ENCODE measurements at regions of chrX and their contacts with region 1.

Region 1: GRCh38 chrX:74015379-74016019 is 288.5 kb upstream of the ZCCHC13 start:
- DNase-seq: peak; percentile 53 to 89 (median 85)
- H3K4me3 ChIP-seq: no peak overlapping the region
- H3K27ac ChIP-seq: no peak overlapping the region
- H3K4me1 ChIP-seq: no peaks in the 10 kb centered on the region
- H3K27me3 ChIP-seq: no peaks in the 10 kb centered on the region

Region 2: GRCh38 chrX:73855546-73855945 is 160.0 kb before region 1 on chrX:
- CTCF ChIA-PET with region 1: interaction called, 22 read pairs
- POLR2A ChIA-PET with region 1: no interaction called
- DNase-seq: peak; percentile 39 to 84 (median 78)
- H3K4me3 ChIP-seq: no peak overlapping the region
- H3K27ac ChIP-seq: no peak overlapping the region
- H3K4me1 ChIP-seq: no peaks in the 10 kb centered on the region
- H3K27me3 ChIP-seq: peaks cover 0 to 2% (median 0%) of the 10 kb centered on the region in 5 experiments

Region 3: GRCh38 chrX:73987166-73987565 is 28.3 kb before region 1 on chrX:
- CTCF ChIA-PET with region 1: no interaction called
- POLR2A ChIA-PET with region 1: no interaction called
- DNase-seq: no peak
- H3K4me3 ChIP-seq: no peak overlapping the region
- H3K27ac ChIP-seq: no peak overlapping the region
- H3K4me1 ChIP-seq: no peaks in the 10 kb centered on the region
- H3K27me3 ChIP-seq: no peaks in the 10 kb centered on the region

Measured in common myeloid progenitor, CD34-positive (primary cell).